B cell (primary cell): ENCODE measurements at regions of chr16 and their contacts with region 1.

Region 1: GRCh38 chr16:75198135-75198600 is 8.8 kb downstream of the CTRB2 start:
- DNase-seq: no peak
- ATAC-seq: no peak
- H3K4me3 ChIP-seq: no peak overlapping the region
- H3K4me3 Mint-ChIP-seq: no peak overlapping the region
- H3K27ac ChIP-seq: no peak overlapping the region
- H3K27ac Mint-ChIP-seq: no peak overlapping the region
- H3K4me1 ChIP-seq: peaks cover 11 to 12% of the 10 kb centered on the region in 2 donors
- H3K4me1 Mint-ChIP-seq: peaks cover 10% of the 10 kb centered on the region
- H3K27me3 ChIP-seq: peaks cover 0 to 54% (median 12%) of the 10 kb centered on the region in 4 experiments
- H3K27me3 Mint-ChIP-seq: peaks cover 37% of the 10 kb centered on the region
- CTCF ChIP-seq: no peak

Region 2: DNA sequence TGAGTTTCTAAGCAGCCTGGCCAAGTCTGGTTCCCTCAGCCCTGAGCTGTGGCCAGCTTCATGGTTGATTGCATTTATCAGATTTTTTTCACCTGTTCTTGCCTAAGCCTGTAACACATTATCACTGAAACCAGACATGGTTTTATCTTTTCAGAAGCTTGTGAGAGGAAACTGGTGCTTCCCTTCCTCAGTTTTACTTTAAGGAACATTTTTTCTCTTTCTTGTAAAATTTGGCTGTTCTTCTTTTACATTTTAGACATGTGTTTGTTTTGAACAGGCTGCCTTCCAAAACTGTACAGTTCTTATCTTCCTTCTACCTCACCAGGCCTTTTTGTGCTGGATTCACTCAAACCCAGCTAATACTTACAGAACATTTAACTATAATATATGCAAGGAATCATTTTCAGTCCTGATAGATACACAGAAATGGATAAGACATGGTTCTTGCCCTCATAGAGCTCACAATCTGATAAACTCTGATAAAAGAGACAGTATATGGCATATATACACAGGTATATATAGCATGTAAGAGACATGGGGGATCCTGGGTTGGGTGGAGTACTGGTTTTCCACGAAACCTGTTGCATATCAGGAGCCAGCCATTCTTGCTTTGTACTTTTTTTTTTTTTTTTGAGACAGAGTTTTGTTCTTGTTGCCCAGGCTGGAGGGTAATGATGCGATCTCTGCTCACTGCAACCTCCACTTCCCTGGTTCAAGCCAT is 154.8 kb before region 1 on chr16:
- CTCF ChIA-PET with region 1: no interaction called
- POLR2A ChIA-PET with region 1: no interaction called
- intact Hi-C with region 1: no loop called
- DNase-seq: no peak
- ATAC-seq: no peak
- H3K4me3 ChIP-seq: no peak overlapping the region
- H3K4me3 Mint-ChIP-seq: no peak overlapping the region
- H3K27ac ChIP-seq: no peak overlapping the region
- H3K27ac Mint-ChIP-seq: no peak overlapping the region
- H3K4me1 ChIP-seq: no peaks in the 10 kb centered on the region
- H3K4me1 Mint-ChIP-seq: peaks cover 6% of the 10 kb centered on the region
- H3K27me3 ChIP-seq: no peaks in the 10 kb centered on the region
- H3K27me3 Mint-ChIP-seq: no peaks in the 10 kb centered on the region
- CTCF ChIP-seq: no peak

Region 3: DNA sequence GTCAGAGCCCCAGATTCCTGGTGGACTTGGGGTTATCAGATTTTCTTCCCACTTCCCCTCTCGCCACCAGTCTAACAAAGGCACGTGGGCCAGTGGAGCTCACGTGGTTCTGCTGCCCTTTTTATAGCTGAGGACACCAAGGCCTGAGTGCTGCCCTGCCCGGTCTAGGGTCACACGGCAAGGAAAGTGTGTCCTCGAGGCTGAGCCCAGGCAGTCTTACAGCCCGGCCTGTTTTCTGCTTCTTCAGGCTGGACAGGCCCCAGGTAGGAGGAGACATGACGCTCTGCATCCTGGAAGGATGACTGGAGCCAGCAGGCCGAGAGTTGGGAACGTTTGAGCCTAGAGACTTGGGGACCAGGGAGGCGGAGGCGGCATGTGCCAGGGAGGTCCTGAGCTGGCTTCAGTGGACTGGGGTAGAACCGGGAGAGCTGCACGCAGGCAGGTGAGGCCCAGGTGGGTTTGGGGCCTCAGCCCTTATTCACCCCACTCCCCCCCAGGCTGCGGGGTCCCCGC is 24.2 kb after region 1 on chr16:
- CTCF ChIA-PET with region 1: interaction called, 12 read pairs
- POLR2A ChIA-PET with region 1: no interaction called
- intact Hi-C with region 1: no loop called
- DNase-seq: no peak
- ATAC-seq: no peak
- H3K4me3 ChIP-seq: no peak overlapping the region
- H3K4me3 Mint-ChIP-seq: no peak overlapping the region
- H3K27ac ChIP-seq: no peak overlapping the region
- H3K27ac Mint-ChIP-seq: no peak overlapping the region
- H3K4me1 ChIP-seq: no peaks in the 10 kb centered on the region
- H3K4me1 Mint-ChIP-seq: peaks cover 13% of the 10 kb centered on the region
- H3K27me3 ChIP-seq: peaks cover 0 to 14% (median 3%) of the 10 kb centered on the region in 4 experiments
- H3K27me3 Mint-ChIP-seq: peaks cover 12% of the 10 kb centered on the region
- CTCF ChIP-seq: no peak

Region 4: GRCh38 chr16:75264996-75265844 is 67.1 kb after region 1 on chr16:
- CTCF ChIA-PET with region 1: no interaction called
- POLR2A ChIA-PET with region 1: no interaction called
- intact Hi-C with region 1: no loop called
- DNase-seq: no peak
- ATAC-seq: no peak
- H3K4me3 ChIP-seq: peak overlapping the region in 3 of 5 experiments; percentile 38 to 44 (median 43)
- H3K4me3 Mint-ChIP-seq: peak overlapping the region; percentile 73
- H3K27ac ChIP-seq: no peak overlapping the region
- H3K27ac Mint-ChIP-seq: no peak overlapping the region
- H3K4me1 ChIP-seq: peaks cover 14 to 18% of the 10 kb centered on the region in 2 donors
- H3K4me1 Mint-ChIP-seq: peaks cover 11% of the 10 kb centered on the region
- H3K27me3 ChIP-seq: peaks cover 0 to 62% (median 25%) of the 10 kb centered on the region in 4 experiments
- H3K27me3 Mint-ChIP-seq: peaks cover 50% of the 10 kb centered on the region
- CTCF ChIP-seq: no peak

Region 5: DNA sequence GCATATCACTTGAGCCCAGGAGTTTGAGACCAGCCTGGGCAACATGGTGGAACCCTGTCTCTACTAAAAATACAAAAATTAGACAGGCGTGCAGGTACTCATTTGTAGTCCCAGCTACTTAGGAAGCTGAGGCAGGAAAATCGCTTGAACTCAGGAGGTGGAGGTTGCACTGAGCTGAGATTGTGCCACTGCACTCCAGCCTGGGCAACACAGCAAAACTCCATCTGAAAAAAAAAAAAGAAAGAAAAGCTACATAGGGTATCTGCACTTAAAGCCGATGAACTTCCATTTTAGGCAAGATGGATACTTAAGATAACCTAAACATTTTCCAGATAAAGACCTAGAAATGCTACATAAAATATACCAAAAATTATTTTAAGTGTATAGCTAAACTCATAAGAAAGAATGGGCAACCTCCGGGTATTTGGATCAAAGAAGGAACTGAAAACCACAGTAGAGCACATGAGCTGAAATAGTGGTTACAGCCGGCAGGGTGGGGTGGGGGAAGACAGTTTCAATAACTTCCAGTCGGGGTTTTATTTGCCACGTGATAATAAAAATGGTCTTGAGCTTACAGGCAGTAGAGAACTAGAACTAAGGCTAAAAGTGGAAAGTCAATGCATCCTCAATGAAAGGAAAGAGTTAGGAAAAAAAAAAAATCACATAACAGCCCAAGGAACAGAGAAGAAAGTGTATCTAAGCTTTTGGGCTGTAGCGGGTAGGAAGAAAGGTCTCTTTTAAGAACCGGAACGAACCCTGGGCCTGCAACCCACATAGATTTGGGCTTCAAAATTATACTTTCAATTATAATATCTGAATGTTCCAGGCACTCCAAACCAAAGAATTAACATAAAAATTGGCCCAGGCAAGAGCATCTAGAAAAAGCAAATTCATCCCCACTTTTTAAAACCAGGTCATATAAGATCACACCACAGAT is 182.0 kb after region 1 on chr16:
- CTCF ChIA-PET with region 1: interaction called, 65 read pairs
- POLR2A ChIA-PET with region 1: interaction called, 3 read pairs
- intact Hi-C with region 1: loop called (anchors 1 kb)
- DNase-seq: peak; percentile 87
- ATAC-seq: peak; percentile 98
- H3K4me3 ChIP-seq: no peak overlapping the region
- H3K4me3 Mint-ChIP-seq: peak overlapping the region; percentile 44
- H3K27ac ChIP-seq: no peak overlapping the region
- H3K27ac Mint-ChIP-seq: peak overlapping the region; percentile 57
- H3K4me1 ChIP-seq: peaks cover 23 to 41% of the 10 kb centered on the region in 2 donors
- H3K4me1 Mint-ChIP-seq: peaks cover 27% of the 10 kb centered on the region
- H3K27me3 ChIP-seq: peaks cover 10 to 79% (median 71%) of the 10 kb centered on the region in 4 experiments
- H3K27me3 Mint-ChIP-seq: peaks cover 77% of the 10 kb centered on the region
- CTCF ChIP-seq: no peak

Region 6: GRCh38 chr16:75392911-75393310 is 194.7 kb after region 1 on chr16:
- CTCF ChIA-PET with region 1: interaction called, 27 read pairs
- POLR2A ChIA-PET with region 1: no interaction called
- intact Hi-C with region 1: no loop called
- DNase-seq: no peak
- ATAC-seq: no peak
- H3K4me3 ChIP-seq: no peak overlapping the region
- H3K4me3 Mint-ChIP-seq: no peak overlapping the region
- H3K27ac ChIP-seq: no peak overlapping the region
- H3K27ac Mint-ChIP-seq: no peak overlapping the region
- H3K4me1 ChIP-seq: no peaks in the 10 kb centered on the region
- H3K4me1 Mint-ChIP-seq: no peaks in the 10 kb centered on the region
- H3K27me3 ChIP-seq: peaks cover 0 to 13% (median 5%) of the 10 kb centered on the region in 4 experiments
- H3K27me3 Mint-ChIP-seq: peaks cover 7% of the 10 kb centered on the region
- CTCF ChIP-seq: no peak

Region 7: DNA sequence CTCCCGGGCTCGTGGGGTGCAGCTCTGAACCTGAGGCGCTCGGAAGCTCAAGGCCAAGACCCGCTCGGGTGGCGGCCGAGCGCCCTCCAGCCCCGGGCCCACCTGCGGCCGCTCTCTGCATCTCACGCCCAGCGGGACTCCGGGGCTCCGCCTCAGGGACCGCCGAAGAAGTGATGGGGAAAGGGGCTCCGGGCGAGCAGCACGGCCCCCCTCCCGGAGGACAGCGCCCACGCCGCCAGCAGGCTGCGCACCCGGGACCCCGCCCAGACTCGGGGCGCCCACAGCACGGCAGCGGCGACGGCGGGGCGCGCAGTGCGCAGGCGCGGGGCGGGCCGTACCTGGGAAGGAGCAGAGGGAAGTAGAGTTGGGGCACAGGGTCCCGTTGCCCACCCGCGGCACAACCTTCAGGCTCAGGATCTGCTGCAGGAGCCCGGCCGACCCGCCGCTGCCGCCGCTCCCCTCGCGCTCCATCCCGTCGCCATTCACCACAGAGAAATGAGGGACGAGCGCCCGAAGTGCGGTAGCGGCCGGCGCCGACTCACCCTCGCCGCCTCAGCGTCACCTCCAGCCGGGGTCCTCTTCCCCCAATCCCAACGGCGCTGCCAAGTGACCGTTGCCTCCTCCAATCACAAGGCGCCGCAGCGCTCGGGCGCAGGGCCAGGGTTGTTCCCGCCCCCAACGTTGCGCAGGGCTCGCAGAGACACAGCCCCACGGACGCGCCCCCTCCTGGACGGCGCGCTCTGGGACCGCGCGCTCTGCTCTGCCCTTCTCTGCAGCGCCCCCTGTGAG is 266.2 kb after region 1 on chr16 and contains the start of gene TMEM170A:
- CTCF ChIA-PET with region 1: interaction called, 4 read pairs
- POLR2A ChIA-PET with region 1: no interaction called
- intact Hi-C with region 1: loop called (anchors 1 kb)
- DNase-seq: peak; percentile 99
- ATAC-seq: peak; percentile 92
- H3K4me3 ChIP-seq: peak within 1 kb of the TSS; percentile 26 to 79 (median 72)
- H3K4me3 Mint-ChIP-seq: peak within 1 kb of the TSS; percentile 96
- H3K27ac ChIP-seq: peak within 1 kb of the TSS; percentile 92 to 93
- H3K27ac Mint-ChIP-seq: peak within 1 kb of the TSS; percentile 93
- H3K4me1 ChIP-seq: peaks cover 15 to 26% of the 10 kb centered on the region in 2 donors
- H3K4me1 Mint-ChIP-seq: peaks cover 37% of the 10 kb centered on the region
- H3K27me3 ChIP-seq: no peaks in the 10 kb centered on the region
- H3K27me3 Mint-ChIP-seq: no peaks in the 10 kb centered on the region
- CTCF ChIP-seq: peak; percentile 100
- total RNA-seq, gene TMEM170A: 37.9 and 45.6 TPM in 2 replicates

Region 8: GRCh38 chr16:75679366-75679765 is 481.2 kb after region 1 on chr16:
- CTCF ChIA-PET with region 1: no interaction called
- POLR2A ChIA-PET with region 1: no interaction called
- intact Hi-C with region 1: no loop called
- DNase-seq: no peak
- ATAC-seq: no peak
- H3K4me3 ChIP-seq: no peak overlapping the region
- H3K4me3 Mint-ChIP-seq: no peak overlapping the region
- H3K27ac ChIP-seq: no peak overlapping the region
- H3K27ac Mint-ChIP-seq: no peak overlapping the region
- H3K4me1 ChIP-seq: no peaks in the 10 kb centered on the region
- H3K4me1 Mint-ChIP-seq: no peaks in the 10 kb centered on the region
- H3K27me3 ChIP-seq: no peaks in the 10 kb centered on the region
- H3K27me3 Mint-ChIP-seq: no peaks in the 10 kb centered on the region
- CTCF ChIP-seq: no peak